Esophagus muscularis mucosa (tissue), 4 donors: ENCODE measurements at regions of chr15 and their contacts with region 1.

Region 1: GRCh38 chr15:44726568-44727484 is 9.5 kb upstream of the TRIM69 start:
- DNase-seq: no peak
- H3K4me3 ChIP-seq: peak overlapping the region in 2 of 4 donors; percentile 17 to 35
- H3K27ac ChIP-seq: peak overlapping the region; percentile 96 to 99 (median 98)
- H3K4me1 ChIP-seq: peaks cover 29 to 54% (median 45%) of the 10 kb centered on the region in 4 donors
- H3K27me3 ChIP-seq: no peaks in the 10 kb centered on the region
- CTCF ChIP-seq: no peak
- EP300 ChIP-seq: no peak
- POLR2A ChIP-seq: peak; percentile 17

Region 2: DNA sequence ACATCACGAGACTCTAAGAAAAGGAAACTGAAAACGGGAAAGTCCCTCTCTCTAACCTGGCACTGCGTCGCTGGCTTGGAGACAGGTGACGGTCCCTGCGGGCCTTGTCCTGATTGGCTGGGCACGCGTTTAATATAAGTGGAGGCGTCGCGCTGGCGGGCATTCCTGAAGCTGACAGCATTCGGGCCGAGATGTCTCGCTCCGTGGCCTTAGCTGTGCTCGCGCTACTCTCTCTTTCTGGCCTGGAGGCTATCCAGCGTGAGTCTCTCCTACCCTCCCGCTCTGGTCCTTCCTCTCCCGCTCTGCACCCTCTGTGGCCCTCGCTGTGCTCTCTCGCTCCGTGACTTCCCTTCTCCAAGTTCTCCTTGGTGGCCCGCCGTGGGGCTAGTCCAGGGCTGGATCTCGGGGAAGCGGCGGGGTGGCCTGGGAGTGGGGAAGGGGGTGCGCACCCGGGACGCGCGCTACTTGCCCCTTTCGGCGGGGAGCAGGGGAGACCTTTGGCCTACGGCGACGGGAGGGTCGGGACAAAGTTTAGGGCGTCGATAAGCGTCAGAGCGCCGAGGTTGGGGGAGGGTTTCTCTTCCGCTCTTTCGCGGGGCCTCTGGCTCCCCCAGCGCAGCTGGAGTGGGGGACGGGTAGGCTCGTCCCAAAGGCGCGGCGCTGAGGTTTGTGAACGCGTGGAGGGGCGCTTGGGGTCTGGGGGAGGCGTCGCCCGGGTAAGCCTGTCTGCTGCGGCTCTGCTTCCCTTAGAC is 15.3 kb before region 1 on chr15 and contains the start of gene B2M:
- intact Hi-C with region 1: loop called (anchors 2 kb)
- DNase-seq: peak; percentile 100
- H3K4me3 ChIP-seq: peak within 1 kb of the TSS; percentile 70 to 98 (median 95)
- H3K27ac ChIP-seq: peak within 1 kb of the TSS; percentile 95 to 100 (median 99)
- H3K4me1 ChIP-seq: peaks cover 34 to 48% (median 43%) of the 10 kb centered on the region in 4 donors
- H3K27me3 ChIP-seq: no peaks in the 10 kb centered on the region
- CTCF ChIP-seq: no peak
- EP300 ChIP-seq: no peak
- POLR2A ChIP-seq: peak; percentile 99
- total RNA-seq, gene B2M: 1,352 to 2,424 (median 1,510) TPM